ENCODE measurements at regions of chr12 and their contacts with region 1.

Region 1: DNA sequence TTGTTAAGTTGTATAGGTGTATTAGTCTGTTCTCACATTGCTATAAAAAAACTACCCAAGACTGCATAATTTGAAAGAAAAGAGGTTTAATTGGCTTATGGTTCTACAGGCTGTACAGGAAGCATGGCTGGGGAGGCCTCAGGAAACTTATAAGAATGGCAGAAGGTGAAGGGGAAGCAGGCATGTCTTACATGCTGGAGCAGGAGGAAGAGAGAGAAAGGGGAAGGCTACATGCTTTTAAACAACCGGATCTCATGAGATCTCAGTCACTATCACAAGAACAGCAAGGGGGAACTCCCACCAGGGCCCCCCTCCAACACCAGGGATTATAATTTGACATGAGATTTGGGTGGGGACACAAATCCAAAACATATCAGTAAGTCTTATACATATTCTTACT is 60.5 kb upstream of the OR10AD1 start:
- DNase-seq: no peak
- H3K4me3 ChIP-seq: no peak overlapping the region
- H3K27ac ChIP-seq: no peak overlapping the region
- H3K4me1 ChIP-seq: no peaks in the 10 kb centered on the region
- H3K27me3 ChIP-seq: peaks cover 4% of the 10 kb centered on the region
- CTCF ChIP-seq: no peak
- EP300 ChIP-seq: no peak
- POLR2A ChIP-seq: no peak

Region 2: GRCh38 chr12:46831335-46832129 is 1432.1 kb before region 1 on chr12:
- in situ Hi-C with region 1: no loop called
- intact Hi-C with region 1: loop called (anchors 10 kb)
- DNase-seq: peak; percentile 21
- H3K4me3 ChIP-seq: peak overlapping the region in 3 of 4 donors; percentile 26 to 46 (median 27)
- H3K27ac ChIP-seq: no peak overlapping the region
- H3K4me1 ChIP-seq: peaks cover 0 to 26% (median 19%) of the 10 kb centered on the region in 4 donors
- H3K27me3 ChIP-seq: peaks cover 57% of the 10 kb centered on the region
- CTCF ChIP-seq: no peak
- EP300 ChIP-seq: no peak
- POLR2A ChIP-seq: no peak

Region 3: GRCh38 chr12:47247433-47247832 is 1016.2 kb before region 1 on chr12:
- in situ Hi-C with region 1: no loop called
- intact Hi-C with region 1: no loop called
- DNase-seq: peak; percentile 21
- H3K4me3 ChIP-seq: no peak overlapping the region
- H3K27ac ChIP-seq: no peak overlapping the region
- H3K4me1 ChIP-seq: no peaks in the 10 kb centered on the region
- H3K27me3 ChIP-seq: no peaks in the 10 kb centered on the region
- CTCF ChIP-seq: no peak
- EP300 ChIP-seq: no peak
- POLR2A ChIP-seq: no peak

Region 4: GRCh38 chr12:48618541-48618940 is 354.9 kb after region 1 on chr12:
- in situ Hi-C with region 1: loop called in 1 of 4 experiments (anchors 25 kb)
- intact Hi-C with region 1: no loop called
- DNase-seq: peak; percentile 74
- H3K4me3 ChIP-seq: no peak overlapping the region
- H3K27ac ChIP-seq: no peak overlapping the region
- H3K4me1 ChIP-seq: no peaks in the 10 kb centered on the region
- H3K27me3 ChIP-seq: peaks cover 9% of the 10 kb centered on the region
- CTCF ChIP-seq: peak; percentile 86 to 97 (median 94)
- EP300 ChIP-seq: no peak
- POLR2A ChIP-seq: no peak